GM10248 (cell line): ENCODE measurements at regions of chr5 and their contacts with region 1.

Region 1: GRCh38 chr5:62354028-62354874 is 48.2 kb downstream of the KIF2A start:
- DNase-seq: peak; percentile 44
- CTCF ChIP-seq: peak; percentile 43

Region 2: GRCh38 chr5:62343428-62343827 is 10.8 kb before region 1 on chr5:
- CTCF ChIA-PET with region 1: interaction called, 19 read pairs
- POLR2A ChIA-PET with region 1: no interaction called
- DNase-seq: no peak
- CTCF ChIP-seq: no peak